Activated B cell treated with CpG ODN at 0.5 μM for 24 hours (primary cell): ENCODE measurements at regions of chr16 and their contacts with region 1.

Region 1: GRCh38 chr16:28211712-28212534 is at the start of gene XPO6:
- DNase-seq: peak; percentile 99
- ATAC-seq: peak; percentile 89
- H3K4me3 Mint-ChIP-seq: peak within 1 kb of the TSS; percentile 89
- H3K27ac Mint-ChIP-seq: peak within 1 kb of the TSS; percentile 79
- H3K4me1 Mint-ChIP-seq: peaks cover 38% of the 10 kb centered on the region
- H3K27me3 Mint-ChIP-seq: no peaks in the 10 kb centered on the region
- CTCF ChIP-seq: no peak
- total RNA-seq, gene XPO6: 212 and 236 TPM in 2 replicates

Region 2: DNA sequence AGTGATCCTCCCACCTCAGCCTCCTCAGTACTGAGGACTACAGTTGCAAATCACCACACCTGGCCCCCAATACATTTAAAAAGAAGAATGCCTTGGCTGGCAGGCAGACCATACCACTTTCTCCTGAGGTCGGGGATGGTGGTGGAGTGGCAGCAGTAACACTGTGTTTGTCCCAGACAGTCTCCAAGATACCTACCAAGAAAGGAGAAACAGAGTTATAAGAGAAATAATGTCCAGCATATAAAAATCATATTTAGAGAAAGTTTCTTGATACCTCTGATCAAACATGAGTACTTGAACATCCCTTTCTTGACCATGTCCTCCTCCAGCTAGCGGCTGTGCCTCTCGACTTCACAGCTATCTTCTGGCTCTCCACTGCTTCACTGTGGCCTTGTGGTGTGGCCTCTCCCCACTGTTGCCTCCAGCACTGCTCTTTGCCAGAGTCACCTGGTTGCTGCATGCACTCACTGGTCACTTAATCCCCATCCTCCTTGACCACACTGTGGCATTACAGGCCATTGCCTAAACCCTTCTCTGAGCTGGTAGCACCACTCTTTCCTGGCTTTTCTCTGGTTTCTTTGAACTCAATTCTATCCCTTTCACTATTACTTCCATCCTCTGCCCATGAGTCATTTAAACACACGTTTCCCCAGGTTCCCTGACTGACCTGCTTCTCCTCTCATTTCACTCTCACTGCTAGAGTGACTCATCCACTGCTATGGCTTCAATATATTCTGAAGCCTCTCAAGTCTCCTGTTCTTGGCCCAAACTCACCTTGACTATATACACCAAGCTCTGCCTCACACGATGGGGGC is 45.3 kb before region 1 on chr16:
- CTCF ChIA-PET with region 1: no interaction called
- POLR2A ChIA-PET with region 1: interaction called, 5 read pairs
- intact Hi-C with region 1: loop called (anchors 5 kb)
- DNase-seq: no peak
- ATAC-seq: peak; percentile 31
- H3K4me3 Mint-ChIP-seq: no peak overlapping the region
- H3K27ac Mint-ChIP-seq: peak overlapping the region; percentile 69
- H3K4me1 Mint-ChIP-seq: peaks cover 65% of the 10 kb centered on the region
- H3K27me3 Mint-ChIP-seq: no peaks in the 10 kb centered on the region
- CTCF ChIP-seq: no peak

Region 3: GRCh38 chr16:28181515-28181914 is 30.4 kb before region 1 on chr16:
- CTCF ChIA-PET with region 1: no interaction called
- POLR2A ChIA-PET with region 1: interaction called, 68 read pairs
- intact Hi-C with region 1: no loop called
- DNase-seq: no peak
- ATAC-seq: no peak
- H3K4me3 Mint-ChIP-seq: peak overlapping the region; percentile 77
- H3K27ac Mint-ChIP-seq: peak overlapping the region; percentile 89
- H3K4me1 Mint-ChIP-seq: peaks cover 81% of the 10 kb centered on the region
- H3K27me3 Mint-ChIP-seq: no peaks in the 10 kb centered on the region
- CTCF ChIP-seq: no peak

Region 4: DNA sequence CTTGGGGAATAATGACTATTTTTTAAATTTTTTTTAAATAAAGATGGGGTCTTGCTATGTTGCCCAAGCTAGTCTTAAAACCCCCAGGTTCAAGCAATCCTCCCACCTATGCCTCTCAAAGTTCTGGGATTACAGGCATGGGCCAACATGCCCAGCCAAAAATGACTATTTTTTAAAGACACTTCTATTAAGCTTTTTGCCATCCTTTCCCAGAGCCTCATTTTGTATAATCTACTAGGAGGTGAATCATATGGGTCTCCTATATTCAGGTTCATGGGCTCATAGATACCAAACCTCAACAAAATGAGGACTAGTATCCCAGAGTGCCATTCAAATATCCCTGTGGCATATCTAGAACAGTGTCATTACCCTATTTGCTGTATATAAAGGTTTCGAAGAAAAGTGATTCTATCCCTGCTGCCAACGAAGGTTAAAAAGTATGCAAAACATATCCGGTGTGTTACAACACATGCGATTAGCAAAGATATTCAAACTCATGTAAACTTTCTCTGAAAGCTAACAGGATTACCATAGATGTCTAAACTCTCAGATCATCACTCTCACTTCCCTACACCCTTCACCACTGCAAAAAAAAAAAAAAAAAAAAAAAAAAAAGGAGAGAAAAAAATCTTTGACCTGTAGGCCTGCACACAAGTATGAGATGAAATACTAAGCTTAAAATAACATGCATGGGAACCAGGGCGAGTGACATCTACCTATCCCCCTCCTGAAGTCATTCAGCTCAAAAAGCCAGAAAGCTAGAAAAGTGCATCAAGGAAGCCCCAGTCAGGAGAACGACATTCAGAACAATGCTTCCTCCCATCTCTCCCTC is 23.6 kb before region 1 on chr16:
- CTCF ChIA-PET with region 1: interaction called, 6 read pairs
- POLR2A ChIA-PET with region 1: interaction called, 70 read pairs
- intact Hi-C with region 1: loop called (anchors 1 kb)
- DNase-seq: no peak
- ATAC-seq: peak; percentile 63
- H3K4me3 Mint-ChIP-seq: peak overlapping the region; percentile 75
- H3K27ac Mint-ChIP-seq: peak overlapping the region; percentile 91
- H3K4me1 Mint-ChIP-seq: peaks cover 93% of the 10 kb centered on the region
- H3K27me3 Mint-ChIP-seq: no peaks in the 10 kb centered on the region
- CTCF ChIP-seq: no peak

Region 5: GRCh38 chr16:28193530-28194423 is 18.1 kb before region 1 on chr16:
- CTCF ChIA-PET with region 1: interaction called, 6 read pairs
- POLR2A ChIA-PET with region 1: interaction called, 70 read pairs
- intact Hi-C with region 1: loop called (anchors 1 kb)
- DNase-seq: no peak
- ATAC-seq: peak; percentile 16
- H3K4me3 Mint-ChIP-seq: peak overlapping the region; percentile 82
- H3K27ac Mint-ChIP-seq: peak overlapping the region; percentile 98
- H3K4me1 Mint-ChIP-seq: peaks cover 81% of the 10 kb centered on the region
- H3K27me3 Mint-ChIP-seq: no peaks in the 10 kb centered on the region
- CTCF ChIP-seq: no peak